ENCODE measurements at regions of chr1 and their contacts with region 1.

Region 1: GRCh38 chr1:214660862-214661261 is 57.9 kb downstream of the CENPF start:
- DNase-seq: no peak
- H3K4me3 ChIP-seq: no peak overlapping the region
- H3K27ac ChIP-seq: no peak overlapping the region
- H3K4me1 ChIP-seq: no peaks in the 10 kb centered on the region
- H3K27me3 ChIP-seq: no peaks in the 10 kb centered on the region
- CTCF ChIP-seq: peak; percentile 52 to 67

Region 2: GRCh38 chr1:214615871-214616270 is 45.0 kb before region 1 on chr1:
- CTCF ChIA-PET with region 1: no interaction called
- dilution Hi-C with region 1: no loop called
- in situ Hi-C with region 1: no loop called
- intact Hi-C with region 1: no loop called
- DNase-seq: no peak
- H3K4me3 ChIP-seq: no peak overlapping the region
- H3K27ac ChIP-seq: no peak overlapping the region
- H3K4me1 ChIP-seq: no peaks in the 10 kb centered on the region
- H3K27me3 ChIP-seq: no peaks in the 10 kb centered on the region
- CTCF ChIP-seq: no peak

Region 3: DNA sequence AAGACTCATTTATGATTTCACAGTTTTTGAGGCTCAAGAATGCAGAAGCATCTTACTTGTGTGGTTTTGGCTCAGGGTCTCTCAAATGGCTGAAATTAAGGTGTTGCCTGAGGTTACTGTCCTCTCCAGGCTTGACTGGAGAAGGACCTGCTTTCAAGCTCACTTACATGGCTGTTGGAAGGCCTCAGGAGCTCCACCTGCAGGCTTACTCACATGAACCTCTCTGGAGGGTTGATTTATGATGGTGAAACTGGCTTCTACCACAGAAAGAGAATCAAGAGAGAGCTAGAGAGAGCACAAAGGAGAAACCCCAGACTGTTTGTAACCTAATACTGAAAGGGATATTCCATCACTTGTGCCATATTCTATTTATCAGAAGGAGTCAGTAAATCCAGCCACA is 415.5 kb after region 1 on chr1:
- CTCF ChIA-PET with region 1: no interaction called
- dilution Hi-C with region 1: no loop called
- in situ Hi-C with region 1: no loop called
- intact Hi-C with region 1: loop called (anchors 1 kb)
- DNase-seq: peak; percentile 50
- H3K4me3 ChIP-seq: no peak overlapping the region
- H3K27ac ChIP-seq: no peak overlapping the region
- H3K4me1 ChIP-seq: no peaks in the 10 kb centered on the region
- H3K27me3 ChIP-seq: no peaks in the 10 kb centered on the region
- CTCF ChIP-seq: peak; percentile 49 to 72

Region 4: GRCh38 chr1:215146341-215146826 is 485.5 kb after region 1 on chr1:
- CTCF ChIA-PET with region 1: no interaction called
- dilution Hi-C with region 1: no loop called
- in situ Hi-C with region 1: loop called (anchors 10 kb)
- intact Hi-C with region 1: loop called (anchors 1 kb)
- DNase-seq: peak; percentile 10
- H3K4me3 ChIP-seq: no peak overlapping the region
- H3K27ac ChIP-seq: no peak overlapping the region
- H3K4me1 ChIP-seq: no peaks in the 10 kb centered on the region
- H3K27me3 ChIP-seq: no peaks in the 10 kb centered on the region
- CTCF ChIP-seq: peak; percentile 67 to 71

Region 5: DNA sequence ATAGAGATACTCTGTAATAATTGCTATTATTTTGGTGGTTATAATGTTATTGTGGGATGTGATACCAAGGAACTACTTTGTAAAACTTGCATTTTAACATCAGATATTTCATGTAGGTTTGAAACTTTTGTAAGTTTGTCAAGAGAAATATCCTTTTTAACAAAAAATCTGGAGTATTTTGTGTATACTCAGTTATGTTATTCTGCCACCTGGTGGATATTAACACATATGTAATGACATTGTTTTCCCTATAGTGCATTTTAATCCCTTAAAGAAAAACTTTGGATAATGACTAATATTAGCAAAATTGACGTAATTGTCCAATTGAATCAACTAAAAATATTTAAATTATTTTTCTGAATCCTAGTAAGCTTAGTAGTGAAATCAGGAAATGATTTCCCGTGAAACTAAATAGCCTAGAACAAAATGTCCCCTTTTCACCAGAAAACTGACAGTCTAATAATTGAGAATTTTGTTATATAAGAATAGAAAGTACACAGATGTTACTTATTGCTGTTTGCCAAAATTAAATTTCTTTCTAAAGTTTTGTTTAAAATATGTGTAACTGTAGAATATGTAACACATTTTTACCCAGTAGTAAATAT is 945.8 kb after region 1 on chr1:
- CTCF ChIA-PET with region 1: no interaction called
- dilution Hi-C with region 1: no loop called
- in situ Hi-C with region 1: no loop called
- intact Hi-C with region 1: loop called (anchors 5 kb)
- DNase-seq: no peak
- H3K4me3 ChIP-seq: no peak overlapping the region
- H3K27ac ChIP-seq: no peak overlapping the region
- H3K4me1 ChIP-seq: no peaks in the 10 kb centered on the region
- H3K27me3 ChIP-seq: no peaks in the 10 kb centered on the region
- CTCF ChIP-seq: peak; percentile 48 to 49